Psoas muscle (tissue), 8 donors: ENCODE measurements at regions of chr2 and their contacts with region 1.

Region 1: DNA sequence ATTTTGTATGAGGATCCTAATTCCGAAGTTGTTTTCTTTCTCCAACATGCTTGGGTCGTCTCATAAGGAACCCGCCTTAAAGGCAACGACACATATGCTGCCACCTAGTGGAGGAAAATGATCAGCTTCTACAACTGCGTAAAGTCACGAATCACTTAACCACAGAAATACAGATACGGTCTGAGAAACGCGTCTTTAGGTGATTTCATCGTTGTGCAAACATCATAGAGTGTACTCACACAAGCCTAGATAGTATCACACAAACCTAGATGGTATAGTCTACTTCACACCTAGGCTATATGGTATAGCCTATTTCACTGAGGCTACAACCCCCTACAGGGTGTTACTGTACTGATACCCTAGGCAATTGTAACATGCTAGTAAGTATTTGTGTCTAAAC is 13.1 kb downstream of the GNLY start:
- DNase-seq: no peak
- ATAC-seq: peak; percentile 39 to 68 (median 62)
- H3K4me3 ChIP-seq: no peak overlapping the region
- H3K27ac ChIP-seq: peak overlapping the region; percentile 87
- H3K4me1 ChIP-seq: peaks cover 65% of the 10 kb centered on the region
- H3K27me3 ChIP-seq: no peaks in the 10 kb centered on the region
- CTCF ChIP-seq: peak; percentile 89

Region 2: GRCh38 chr2:85188852-85189587 is 518.3 kb before region 1 on chr2:
- intact Hi-C with region 1: no loop called
- DNase-seq: no peak
- ATAC-seq: peak in 1 of 4 donors; percentile 29
- H3K4me3 ChIP-seq: no peak overlapping the region
- H3K27ac ChIP-seq: no peak overlapping the region
- H3K4me1 ChIP-seq: peaks cover 3% of the 10 kb centered on the region
- H3K27me3 ChIP-seq: no peaks in the 10 kb centered on the region
- CTCF ChIP-seq: no peak

Region 3: DNA sequence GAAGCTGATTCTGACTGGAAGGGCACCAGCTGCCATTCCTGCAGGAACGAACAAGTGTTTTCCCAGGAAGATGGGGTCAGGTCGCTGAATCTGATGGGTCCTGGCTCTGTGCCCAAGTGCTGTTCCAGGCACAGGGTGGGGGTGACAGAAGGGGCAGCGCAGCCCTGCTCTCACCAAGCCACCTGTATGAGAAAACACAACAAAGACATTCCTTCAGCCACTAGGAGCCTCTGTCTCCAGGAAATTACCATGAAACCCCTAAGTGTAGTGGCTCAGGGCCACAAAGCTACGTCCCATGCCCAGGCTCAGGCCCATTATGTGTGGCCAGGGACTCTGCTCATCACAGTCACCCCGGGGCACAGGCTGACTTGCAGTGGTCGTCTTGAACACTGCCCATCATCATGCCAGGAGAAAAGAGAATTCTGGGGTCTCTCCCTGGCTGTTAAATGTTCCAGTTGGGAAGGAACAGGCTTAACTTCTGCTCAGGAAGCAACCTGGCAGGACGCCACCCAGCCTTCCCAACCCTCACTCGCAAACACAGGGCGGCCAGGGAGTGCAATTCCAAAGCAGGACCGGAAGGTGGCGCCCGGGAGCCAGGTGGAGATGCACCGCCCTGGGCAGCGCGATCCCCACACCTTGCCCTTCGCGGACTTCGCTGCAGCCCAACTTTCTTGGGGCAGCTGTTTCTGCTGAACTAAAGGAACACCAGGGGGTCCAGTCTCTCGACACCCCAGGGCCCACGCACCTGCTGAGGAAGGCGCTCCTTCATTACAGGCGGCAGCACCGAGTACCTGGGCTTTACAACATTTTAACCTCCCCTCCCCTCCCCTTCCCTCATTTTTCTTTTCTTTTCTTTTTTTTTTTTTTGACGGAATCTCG is 28.3 kb before region 1 on chr2:
- intact Hi-C with region 1: loop called (anchors 1 to 2 kb)
- DNase-seq: peak; percentile 92 to 95
- ATAC-seq: peak; percentile 66 to 84 (median 71)
- H3K4me3 ChIP-seq: no peak overlapping the region
- H3K27ac ChIP-seq: no peak overlapping the region
- H3K4me1 ChIP-seq: peaks cover 26% of the 10 kb centered on the region
- H3K27me3 ChIP-seq: no peaks in the 10 kb centered on the region
- CTCF ChIP-seq: peak; percentile 99